Activated B cell treated with CpG ODN at 0.5 μM for 24 hours (primary cell): ENCODE measurements at regions of chr1 and their contacts with region 1.

Region 1: DNA sequence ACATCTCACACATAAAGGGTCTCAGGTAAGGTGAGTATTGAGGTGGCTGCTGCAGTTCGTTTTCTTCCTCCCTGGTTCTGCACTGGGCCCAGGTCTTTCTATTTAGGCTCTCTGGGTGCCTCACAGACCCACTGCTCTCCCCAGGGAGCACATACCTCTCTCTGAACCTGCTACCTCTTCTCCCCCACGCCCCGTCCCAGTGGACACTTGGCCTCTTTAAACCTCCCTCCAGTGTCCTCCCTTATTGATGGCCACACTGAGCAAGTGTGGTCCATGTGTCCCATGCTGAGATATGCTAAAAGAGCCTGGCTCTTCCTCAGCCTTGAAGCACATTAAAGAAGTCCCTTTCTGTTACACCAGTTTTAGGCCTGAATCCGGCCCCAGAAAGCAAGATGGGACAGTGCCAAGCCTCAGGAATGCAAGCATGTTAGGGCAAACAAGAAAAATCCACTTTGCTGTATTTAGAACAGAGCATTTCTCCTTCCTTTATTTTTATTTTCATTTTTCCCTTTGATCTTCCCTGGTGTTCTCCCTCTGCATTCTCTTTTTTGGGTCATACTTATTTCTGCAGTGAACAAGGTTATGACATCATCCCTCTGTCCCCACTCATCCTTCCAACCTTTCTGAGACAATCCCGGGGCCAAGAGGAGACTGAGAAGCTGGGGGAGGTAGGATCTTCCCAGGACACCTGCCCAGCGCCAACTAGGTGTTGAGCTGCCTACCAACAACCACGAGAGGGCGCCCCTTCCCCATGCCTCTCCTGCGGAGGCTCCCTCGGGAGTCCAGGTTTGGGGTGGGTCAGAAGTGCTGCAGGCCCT is 5.0 kb upstream of the CHI3L2 start:
- DNase-seq: peak; percentile 75
- ATAC-seq: peak; percentile 49
- H3K4me3 Mint-ChIP-seq: peak overlapping the region; percentile 50
- H3K27ac Mint-ChIP-seq: peak overlapping the region; percentile 95
- H3K4me1 Mint-ChIP-seq: peaks cover 87% of the 10 kb centered on the region
- H3K27me3 Mint-ChIP-seq: no peaks in the 10 kb centered on the region
- CTCF ChIP-seq: peak; percentile 80

Region 2: GRCh38 chr1:110963691-110964399 is 258.7 kb before region 1 on chr1 and contains the start of gene LRIF1:
- CTCF ChIA-PET with region 1: no interaction called
- POLR2A ChIA-PET with region 1: no interaction called
- intact Hi-C with region 1: loop called (anchors 5 kb)
- DNase-seq: peak; percentile 99
- ATAC-seq: peak; percentile 97
- H3K4me3 Mint-ChIP-seq: peak within 1 kb of the TSS; percentile 84
- H3K27ac Mint-ChIP-seq: peak within 1 kb of the TSS; percentile 91
- H3K4me1 Mint-ChIP-seq: peaks cover 38% of the 10 kb centered on the region
- H3K27me3 Mint-ChIP-seq: peaks cover 10% of the 10 kb centered on the region
- CTCF ChIP-seq: no peak
- total RNA-seq, gene LRIF1: 16.7 and 17.0 TPM in 2 replicates

Region 3: GRCh38 chr1:111139956-111140679 is 82.4 kb before region 1 on chr1 and contains the starts of genes CEPT1 and DRAM2:
- CTCF ChIA-PET with region 1: interaction called, 4 read pairs
- POLR2A ChIA-PET with region 1: interaction called, 37 read pairs
- intact Hi-C with region 1: loop called (anchors 2 kb)
- DNase-seq: peak; percentile 90
- ATAC-seq: peak; percentile 78
- H3K4me3 Mint-ChIP-seq: peak within 1 kb of the TSS; percentile 100
- H3K27ac Mint-ChIP-seq: peak within 1 kb of the TSS; percentile 99
- H3K4me1 Mint-ChIP-seq: peaks cover 74% of the 10 kb centered on the region
- H3K27me3 Mint-ChIP-seq: no peaks in the 10 kb centered on the region
- CTCF ChIP-seq: no peak
- total RNA-seq, gene CEPT1: 74.4 and 87.0 TPM in 2 replicates
- total RNA-seq, gene DRAM2: 61.8 and 77.6 TPM in 2 replicates

Region 4: DNA sequence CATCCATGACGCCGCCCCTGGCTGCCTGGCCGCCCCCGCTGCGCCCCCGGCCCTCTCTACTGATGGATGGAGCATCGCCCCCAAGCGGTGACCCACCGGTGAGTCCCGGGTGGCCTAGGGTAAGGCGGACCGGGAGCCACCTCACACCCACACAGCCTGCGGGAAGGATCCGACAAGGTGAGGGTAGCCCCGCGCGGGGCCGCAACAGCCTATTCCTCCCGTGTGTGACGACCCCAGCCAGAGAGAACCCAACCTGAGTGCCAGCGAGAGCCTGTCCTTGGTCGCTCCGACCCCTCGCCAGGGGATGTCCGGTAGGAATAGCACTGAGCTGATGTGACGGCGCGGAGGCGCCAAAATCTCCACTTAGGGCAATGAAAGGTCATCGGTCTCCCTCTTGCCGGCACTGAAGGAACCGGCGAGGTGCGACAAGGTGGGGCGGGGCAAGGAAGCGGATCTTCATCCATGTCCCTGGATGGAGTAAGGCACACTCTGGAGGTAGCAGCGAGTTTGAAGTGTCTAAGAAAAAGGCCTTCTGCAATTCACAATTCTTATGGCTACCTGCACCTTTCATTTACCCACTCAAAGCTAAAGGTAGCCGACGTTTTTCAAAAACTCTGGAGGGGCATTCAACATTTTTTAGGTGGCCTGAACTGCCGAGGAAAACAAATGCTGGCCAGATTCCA is 48.4 kb after region 1 on chr1:
- CTCF ChIA-PET with region 1: interaction called, 3 read pairs
- POLR2A ChIA-PET with region 1: interaction called, 5 read pairs
- intact Hi-C with region 1: loop called (anchors 2 kb)
- DNase-seq: no peak
- ATAC-seq: peak; percentile 21
- H3K4me3 Mint-ChIP-seq: peak overlapping the region; percentile 73
- H3K27ac Mint-ChIP-seq: no peak overlapping the region
- H3K4me1 Mint-ChIP-seq: peaks cover 25% of the 10 kb centered on the region
- H3K27me3 Mint-ChIP-seq: peaks cover 38% of the 10 kb centered on the region
- CTCF ChIP-seq: no peak

Region 5: GRCh38 chr1:111441573-111442192 is 219.2 kb after region 1 on chr1:
- CTCF ChIA-PET with region 1: interaction called, 18 read pairs
- POLR2A ChIA-PET with region 1: no interaction called
- intact Hi-C with region 1: loop called (anchors 1 kb)
- DNase-seq: peak; percentile 40
- ATAC-seq: peak; percentile 91
- H3K4me3 Mint-ChIP-seq: no peak overlapping the region
- H3K27ac Mint-ChIP-seq: no peak overlapping the region
- H3K4me1 Mint-ChIP-seq: peaks cover 19% of the 10 kb centered on the region
- H3K27me3 Mint-ChIP-seq: no peaks in the 10 kb centered on the region
- CTCF ChIP-seq: no peak

Region 6: GRCh38 chr1:111603979-111604378 is 381.5 kb after region 1 on chr1:
- CTCF ChIA-PET with region 1: no interaction called
- POLR2A ChIA-PET with region 1: no interaction called
- intact Hi-C with region 1: loop called (anchors 5 kb)
- DNase-seq: no peak
- ATAC-seq: peak; percentile 65
- H3K4me3 Mint-ChIP-seq: peak overlapping the region; percentile 58
- H3K27ac Mint-ChIP-seq: peak overlapping the region; percentile 81
- H3K4me1 Mint-ChIP-seq: peaks cover 67% of the 10 kb centered on the region
- H3K27me3 Mint-ChIP-seq: no peaks in the 10 kb centered on the region
- CTCF ChIP-seq: no peak

Region 7: GRCh38 chr1:112904071-112904830 is 1681.7 kb after region 1 on chr1:
- CTCF ChIA-PET with region 1: no interaction called
- POLR2A ChIA-PET with region 1: no interaction called
- intact Hi-C with region 1: no loop called
- DNase-seq: no peak
- ATAC-seq: no peak
- H3K4me3 Mint-ChIP-seq: no peak overlapping the region
- H3K27ac Mint-ChIP-seq: no peak overlapping the region
- H3K4me1 Mint-ChIP-seq: no peaks in the 10 kb centered on the region
- H3K27me3 Mint-ChIP-seq: no peaks in the 10 kb centered on the region
- CTCF ChIP-seq: no peak